ENCODE measurements at regions of chr3 and their contacts with region 1.

Region 1: DNA sequence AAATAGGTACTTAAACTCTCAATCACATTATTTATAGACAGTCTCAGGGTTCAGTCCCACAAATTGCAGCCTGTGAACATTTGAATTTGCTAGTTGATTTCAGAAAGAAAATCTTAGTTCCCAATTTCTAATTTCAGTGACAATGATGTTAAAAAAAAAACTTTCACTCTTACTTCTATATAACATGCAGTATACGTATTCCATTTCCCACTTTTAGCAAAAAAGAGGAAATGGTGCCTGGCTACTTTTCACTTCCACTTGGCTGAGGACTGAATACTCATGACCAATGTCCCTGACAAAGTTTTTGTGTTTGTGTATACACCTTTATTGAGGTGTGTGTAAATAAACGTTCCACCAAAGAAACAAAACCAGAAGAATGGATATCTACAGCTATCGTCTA is 32.1 kb upstream of the XCR1 start:
- H3K4me3 Mint-ChIP-seq: no peak overlapping the region
- H3K27ac Mint-ChIP-seq: no peak overlapping the region
- H3K4me1 Mint-ChIP-seq: peaks cover 60% of the 10 kb centered on the region
- H3K27me3 Mint-ChIP-seq: peaks cover 66% of the 10 kb centered on the region

Region 2: DNA sequence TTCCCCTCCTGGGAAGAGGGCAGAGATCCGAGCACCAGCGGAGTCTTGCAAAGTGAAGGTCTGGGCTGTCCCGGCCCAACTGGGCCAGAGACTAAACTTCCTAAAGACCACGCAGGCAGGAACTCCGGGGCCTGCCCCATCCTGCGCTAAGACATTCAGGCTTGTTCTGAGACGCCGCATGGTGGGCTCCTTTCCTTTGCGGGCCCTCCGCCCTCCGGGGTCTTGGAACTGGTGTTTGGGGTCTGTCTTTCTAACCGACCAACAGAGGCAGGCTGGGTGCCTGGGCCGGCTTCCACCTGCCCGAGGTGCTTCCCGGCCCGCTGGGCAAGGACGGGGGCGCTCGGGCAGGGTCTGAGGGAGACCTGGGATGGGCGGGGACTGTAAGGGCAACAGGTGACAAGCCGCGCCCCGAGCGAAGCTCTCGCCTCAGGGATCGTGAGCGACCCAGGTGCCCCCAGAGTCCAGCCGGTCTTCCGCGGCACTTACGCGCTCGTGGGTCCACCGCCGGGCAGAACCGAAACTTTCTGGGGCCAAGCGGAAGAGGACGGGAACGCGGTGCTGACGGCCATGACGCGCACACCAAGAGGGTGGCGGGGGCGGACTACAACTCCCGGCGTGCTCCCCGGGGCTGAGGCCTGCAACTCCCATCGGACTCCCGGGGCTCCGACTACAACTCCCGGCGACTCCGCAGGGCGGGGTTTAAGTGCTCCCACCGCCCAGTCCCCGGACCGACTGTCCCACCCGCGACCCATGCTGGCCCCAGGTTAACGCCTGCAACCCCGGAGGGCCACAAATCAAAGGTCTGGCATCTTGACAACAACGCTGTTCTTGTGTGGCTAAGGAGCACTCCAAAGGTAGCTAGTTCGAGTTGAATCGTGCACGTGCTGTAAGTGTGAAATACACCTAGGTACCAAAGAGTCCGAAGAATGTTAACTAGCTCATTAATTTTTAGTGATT is 63.9 kb before region 1 on chr3 and contains the start of gene FYCO1:
- intact Hi-C with region 1: loop called (anchors 10 kb)
- H3K4me3 Mint-ChIP-seq: peak within 1 kb of the TSS; percentile 83
- H3K27ac Mint-ChIP-seq: peak within 1 kb of the TSS; percentile 93
- H3K4me1 Mint-ChIP-seq: peaks cover 55% of the 10 kb centered on the region
- H3K27me3 Mint-ChIP-seq: peaks cover 5% of the 10 kb centered on the region

Region 3: GRCh38 chr3:46186471-46187340 is 127.3 kb after region 1 on chr3:
- intact Hi-C with region 1: no loop called
- H3K4me3 Mint-ChIP-seq: no peak overlapping the region
- H3K27ac Mint-ChIP-seq: peak overlapping the region; percentile 45
- H3K4me1 Mint-ChIP-seq: peaks cover 55% of the 10 kb centered on the region
- H3K27me3 Mint-ChIP-seq: no peaks in the 10 kb centered on the region